ENCODE measurements at regions of chr19 and their contacts with region 1.

Region 1: DNA sequence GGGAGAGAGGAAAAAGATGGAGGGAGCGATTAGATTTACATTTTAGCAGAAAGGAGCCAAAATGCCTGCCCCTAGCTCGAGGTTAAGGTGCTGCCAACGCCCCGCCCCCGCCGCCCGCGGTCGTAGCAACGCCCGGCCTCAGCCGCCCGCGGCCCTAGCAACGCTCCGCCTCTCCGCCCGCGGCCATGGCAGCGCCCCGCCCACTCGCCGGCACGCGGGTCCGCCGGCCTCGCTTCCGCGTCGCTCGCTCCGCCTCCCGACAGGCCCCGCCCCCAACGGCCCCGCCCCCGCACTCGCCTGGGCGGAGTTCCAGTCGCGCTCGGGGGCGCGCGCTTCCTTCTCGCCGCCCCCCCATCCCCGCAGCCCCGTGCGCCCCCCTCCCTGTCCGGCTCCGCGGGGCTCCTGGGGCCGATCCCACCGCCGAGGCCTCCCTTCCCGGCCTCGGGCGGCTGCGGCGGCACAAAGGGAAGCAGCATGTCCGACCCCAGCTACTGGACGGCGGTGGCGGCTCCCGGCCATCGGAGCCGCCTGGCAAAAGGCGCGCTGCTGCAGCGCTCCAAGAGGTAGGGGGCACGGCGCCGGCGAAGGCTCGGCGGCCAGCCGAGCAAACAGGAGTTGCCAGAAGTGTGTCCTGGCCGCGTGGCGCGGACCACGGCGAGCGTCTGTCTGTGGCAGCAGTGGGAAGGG is 20.3 kb downstream of the MAST3 start:
- DNase-seq: peak; percentile 90 to 99 (median 95)
- ATAC-seq: peak; percentile 94
- H3K4me3 ChIP-seq: peak overlapping the region; percentile 71
- H3K4me3 Mint-ChIP-seq: peak overlapping the region; percentile 82 to 96 (median 90)
- H3K27ac ChIP-seq: peak overlapping the region; percentile 80
- H3K27ac Mint-ChIP-seq: peak overlapping the region; percentile 84 to 99 (median 96)
- H3K4me1 ChIP-seq: peaks cover 22 to 24% of the 10 kb centered on the region in 2 donors
- H3K4me1 Mint-ChIP-seq: peaks cover 24 to 47% (median 37%) of the 10 kb centered on the region in 7 donors
- H3K27me3 ChIP-seq: no peaks in the 10 kb centered on the region
- H3K27me3 Mint-ChIP-seq: no peaks in the 10 kb centered on the region

Region 2: DNA sequence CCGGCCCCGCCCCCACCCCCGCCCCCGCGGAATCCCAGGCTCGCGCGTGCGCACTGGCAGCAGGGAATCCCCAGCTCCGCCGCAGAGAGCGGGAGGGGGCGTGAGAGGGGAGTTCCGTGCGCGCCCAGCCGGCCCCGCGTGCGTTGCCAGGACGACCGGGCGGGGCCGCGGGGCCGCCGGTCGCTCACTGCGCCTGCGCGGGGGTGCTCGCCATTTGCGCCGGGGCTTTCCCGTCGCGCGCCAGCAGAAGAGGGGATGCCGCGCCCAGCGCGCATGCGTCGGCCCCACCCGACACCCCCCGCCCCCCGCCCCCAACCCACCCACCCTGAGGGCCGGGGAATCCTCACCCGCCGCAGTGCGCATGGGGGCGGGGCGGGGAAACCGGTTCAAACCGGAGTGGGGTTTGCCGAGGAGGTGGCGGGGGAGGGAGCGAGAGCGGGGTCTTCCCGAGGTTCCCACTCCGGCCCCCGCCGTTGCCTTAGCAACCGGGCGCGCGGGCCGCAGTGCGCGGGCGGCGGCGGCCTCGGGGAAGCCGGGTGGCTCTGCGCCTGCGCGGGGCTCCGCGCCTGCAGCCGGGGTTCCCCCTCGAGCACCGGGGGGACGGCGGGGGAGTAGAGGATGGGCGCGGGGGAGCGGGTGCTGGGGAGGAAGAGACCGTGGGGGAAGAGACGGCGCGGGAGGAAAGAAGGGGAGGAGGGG is 169.9 kb before region 1 on chr19:
- CTCF ChIA-PET with region 1: no interaction called
- POLR2A ChIA-PET with region 1: no interaction called
- intact Hi-C with region 1: loop called in 1 of 2 experiments (anchors 2 kb)
- DNase-seq: peak; percentile 91 to 99 (median 95)
- ATAC-seq: peak; percentile 87
- H3K4me3 ChIP-seq: peak overlapping the region; percentile 41
- H3K4me3 Mint-ChIP-seq: peak overlapping the region; percentile 68 to 88 (median 82)
- H3K27ac ChIP-seq: peak overlapping the region; percentile 99
- H3K27ac Mint-ChIP-seq: peak overlapping the region in 7 of 9 donors; percentile 48 to 96 (median 87)
- H3K4me1 ChIP-seq: peaks cover 37 to 50% of the 10 kb centered on the region in 2 donors
- H3K4me1 Mint-ChIP-seq: peaks cover 22 to 55% (median 43%) of the 10 kb centered on the region in 7 donors
- H3K27me3 ChIP-seq: peaks cover 18 to 28% of the 10 kb centered on the region in 2 donors
- H3K27me3 Mint-ChIP-seq: peaks cover 27 to 43% (median 30%) of the 10 kb centered on the region in 5 donors

Region 3: GRCh38 chr19:18063463-18063862 is 54.4 kb before region 1 on chr19:
- CTCF ChIA-PET with region 1: interaction called, 6 read pairs
- POLR2A ChIA-PET with region 1: no interaction called
- intact Hi-C with region 1: loop called in 1 of 2 experiments (anchors 1 kb)
- DNase-seq: peak in 5 of 9 donors; percentile 31 to 45 (median 33)
- ATAC-seq: no peak
- H3K4me3 ChIP-seq: no peak overlapping the region
- H3K4me3 Mint-ChIP-seq: no peak overlapping the region
- H3K27ac ChIP-seq: no peak overlapping the region
- H3K27ac Mint-ChIP-seq: peak overlapping the region in 4 of 9 donors; percentile 28 to 76 (median 55)
- H3K4me1 ChIP-seq: peaks cover 4% of the 10 kb centered on the region in 2 donors
- H3K4me1 Mint-ChIP-seq: peaks cover 0 to 6% (median 4%) of the 10 kb centered on the region in 7 donors
- H3K27me3 ChIP-seq: no peaks in the 10 kb centered on the region
- H3K27me3 Mint-ChIP-seq: no peaks in the 10 kb centered on the region

Region 4: DNA sequence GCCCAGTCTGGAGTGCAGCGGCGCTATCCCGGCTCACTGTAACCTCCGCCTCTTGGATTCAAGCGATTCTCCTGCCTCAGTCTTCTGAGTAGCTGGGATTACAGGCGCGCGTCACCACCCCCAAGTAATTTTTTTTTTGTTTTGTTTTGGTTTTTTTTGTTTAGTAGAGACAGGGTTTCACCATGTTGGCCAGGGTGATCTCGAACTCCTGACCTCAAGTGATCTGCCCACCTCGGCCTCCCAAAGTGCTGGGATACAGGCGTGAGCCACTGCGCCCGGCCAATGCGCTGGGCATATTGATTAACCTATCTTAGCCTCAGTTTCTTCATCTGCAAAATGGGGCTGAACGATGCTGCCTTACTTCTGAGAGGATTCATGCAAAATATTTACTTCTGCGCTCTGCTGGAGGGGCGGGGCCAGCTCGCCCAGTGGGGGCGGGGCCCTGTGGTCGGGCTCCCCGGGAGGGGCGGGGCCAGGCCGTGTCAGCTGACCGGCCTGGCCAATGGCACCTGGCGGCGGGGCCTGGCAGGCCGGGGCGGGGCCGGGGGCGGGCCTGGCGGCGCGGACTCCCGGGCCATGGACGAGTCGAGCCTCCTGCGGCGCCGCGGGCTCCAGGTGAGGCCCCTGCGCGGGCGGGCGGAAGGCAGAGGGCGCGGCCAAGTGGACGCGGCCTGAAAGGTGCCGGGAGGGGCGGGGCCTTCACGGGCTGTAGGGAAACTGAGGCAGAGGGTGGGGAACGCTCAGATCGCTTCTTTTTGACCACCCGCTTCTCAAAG is 20.4 kb before region 1 on chr19 and contains the start of gene MAST3:
- CTCF ChIA-PET with region 1: interaction called, 7 read pairs
- POLR2A ChIA-PET with region 1: interaction called, 13 read pairs
- intact Hi-C with region 1: loop called in 1 of 2 experiments (anchors 2 kb)
- DNase-seq: peak; percentile 82 to 96 (median 93)
- ATAC-seq: peak; percentile 100
- H3K4me3 ChIP-seq: peak within 1 kb of the TSS; percentile 31
- H3K4me3 Mint-ChIP-seq: peak within 1 kb of the TSS; percentile 86 to 89 (median 87)
- H3K27ac ChIP-seq: peak within 1 kb of the TSS; percentile 70
- H3K27ac Mint-ChIP-seq: peak within 1 kb of the TSS in 8 of 9 donors; percentile 73 to 94 (median 87)
- H3K4me1 ChIP-seq: peaks cover 21 to 22% of the 10 kb centered on the region in 2 donors
- H3K4me1 Mint-ChIP-seq: peaks cover 18 to 55% (median 49%) of the 10 kb centered on the region in 7 donors
- H3K27me3 ChIP-seq: no peaks in the 10 kb centered on the region
- H3K27me3 Mint-ChIP-seq: peaks cover 0 to 16% (median 0%) of the 10 kb centered on the region in 5 donors
- total RNA-seq, gene MAST3: 36.0 to 58.7 (median 50.6) TPM

Region 5: GRCh38 chr19:18152444-18152816 is 34.6 kb after region 1 on chr19:
- CTCF ChIA-PET with region 1: interaction called, 25 read pairs
- POLR2A ChIA-PET with region 1: interaction called, 37 read pairs
- intact Hi-C with region 1: loop called (anchors 1 kb)
- DNase-seq: peak; percentile 92 to 99 (median 97)
- ATAC-seq: peak; percentile 76
- H3K4me3 ChIP-seq: peak overlapping the region; percentile 82
- H3K4me3 Mint-ChIP-seq: peak overlapping the region; percentile 81 to 95 (median 88)
- H3K27ac ChIP-seq: peak overlapping the region; percentile 88
- H3K27ac Mint-ChIP-seq: peak overlapping the region; percentile 89 to 97 (median 95)
- H3K4me1 ChIP-seq: peaks cover 16 to 20% of the 10 kb centered on the region in 2 donors
- H3K4me1 Mint-ChIP-seq: peaks cover 9 to 32% (median 24%) of the 10 kb centered on the region in 7 donors
- H3K27me3 ChIP-seq: no peaks in the 10 kb centered on the region
- H3K27me3 Mint-ChIP-seq: no peaks in the 10 kb centered on the region

Region 6: GRCh38 chr19:18167975-18168645 is 50.3 kb after region 1 on chr19:
- CTCF ChIA-PET with region 1: interaction called, 16 read pairs
- POLR2A ChIA-PET with region 1: interaction called, 3 read pairs
- intact Hi-C with region 1: loop called (anchors 1 kb)
- DNase-seq: peak in 7 of 9 donors; percentile 32 to 70 (median 59)
- ATAC-seq: peak; percentile 71
- H3K4me3 ChIP-seq: no peak overlapping the region
- H3K4me3 Mint-ChIP-seq: no peak overlapping the region
- H3K27ac ChIP-seq: no peak overlapping the region
- H3K27ac Mint-ChIP-seq: peak overlapping the region in 2 of 9 donors; percentile 5 to 65
- H3K4me1 ChIP-seq: peaks cover 0 to under 1% of the 10 kb centered on the region in 2 donors
- H3K4me1 Mint-ChIP-seq: peaks cover 0 to 14% (median 4%) of the 10 kb centered on the region in 7 donors
- H3K27me3 ChIP-seq: no peaks in the 10 kb centered on the region
- H3K27me3 Mint-ChIP-seq: no peaks in the 10 kb centered on the region

Region 7: DNA sequence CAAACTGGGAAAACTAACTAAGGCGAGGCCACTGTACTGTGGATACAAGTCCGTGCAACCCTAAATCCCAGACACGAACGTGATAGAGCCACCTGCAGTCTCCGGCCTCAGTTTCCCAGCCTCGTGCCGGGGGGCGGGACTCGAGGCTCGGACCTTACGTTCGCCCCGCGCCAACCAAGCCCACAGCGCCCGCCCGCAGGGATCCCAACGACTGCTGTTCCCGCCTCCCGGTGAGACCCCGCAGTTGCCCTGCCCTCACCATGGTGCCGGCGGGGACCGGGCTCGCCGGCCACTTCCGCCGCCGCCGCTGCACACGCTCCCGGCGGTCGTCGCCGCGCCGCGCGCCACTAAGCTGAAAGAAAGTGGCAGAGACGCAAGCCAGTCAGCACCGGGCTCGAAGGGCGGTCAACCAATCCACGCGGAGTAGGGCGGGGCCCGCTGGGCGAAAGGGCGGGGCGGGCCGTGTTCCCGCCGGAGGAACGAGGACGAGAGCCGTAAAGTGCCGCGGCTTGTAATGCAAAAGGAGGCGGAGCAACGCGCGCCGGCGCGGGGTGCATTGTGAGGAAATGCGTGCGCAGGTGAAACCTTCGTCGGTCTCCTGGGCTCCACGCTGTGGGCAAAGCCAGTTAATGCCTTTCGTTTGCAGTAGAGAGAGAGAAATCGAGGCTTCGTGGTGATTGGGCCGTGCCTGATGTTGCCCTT is 205.1 kb after region 1 on chr19 and contains the start of gene LSM4:
- CTCF ChIA-PET with region 1: no interaction called
- POLR2A ChIA-PET with region 1: no interaction called
- intact Hi-C with region 1: loop called in 1 of 2 experiments (anchors 1 kb)
- DNase-seq: peak; percentile 95 to 100 (median 99)
- ATAC-seq: peak; percentile 98
- H3K4me3 ChIP-seq: peak within 1 kb of the TSS; percentile 86
- H3K4me3 Mint-ChIP-seq: peak within 1 kb of the TSS; percentile 80 to 88 (median 84)
- H3K27ac ChIP-seq: peak within 1 kb of the TSS; percentile 94
- H3K27ac Mint-ChIP-seq: peak within 1 kb of the TSS; percentile 89 to 99 (median 95)
- H3K4me1 ChIP-seq: peaks cover 47 to 55% of the 10 kb centered on the region in 2 donors
- H3K4me1 Mint-ChIP-seq: peaks cover 42 to 58% (median 51%) of the 10 kb centered on the region in 7 donors
- H3K27me3 ChIP-seq: no peaks in the 10 kb centered on the region
- H3K27me3 Mint-ChIP-seq: no peaks in the 10 kb centered on the region
- total RNA-seq, gene LSM4: 45.3 to 131 (median 56.2) TPM